Activated CD8-positive, alpha-beta memory T cell treated with anti-CD3 and anti-CD28 coated beads, Interleukin-2, amount 10 ng/mL, durations not matched to agents 7 days and 5 days (primary cell): ENCODE measurements at regions of chr19 and their contacts with region 1.

Region 1: GRCh38 chr19:10717356-10718204 is at the start of gene DNM2:
- DNase-seq: peak; percentile 99
- ATAC-seq: peak; percentile 93
- H3K4me3 Mint-ChIP-seq: peak within 1 kb of the TSS; percentile 98
- H3K27ac Mint-ChIP-seq: peak within 1 kb of the TSS; percentile 90
- H3K4me1 Mint-ChIP-seq: peaks cover 33% of the 10 kb centered on the region
- H3K27me3 Mint-ChIP-seq: no peaks in the 10 kb centered on the region
- total RNA-seq, gene DNM2: 267 to 315 TPM

Region 2: DNA sequence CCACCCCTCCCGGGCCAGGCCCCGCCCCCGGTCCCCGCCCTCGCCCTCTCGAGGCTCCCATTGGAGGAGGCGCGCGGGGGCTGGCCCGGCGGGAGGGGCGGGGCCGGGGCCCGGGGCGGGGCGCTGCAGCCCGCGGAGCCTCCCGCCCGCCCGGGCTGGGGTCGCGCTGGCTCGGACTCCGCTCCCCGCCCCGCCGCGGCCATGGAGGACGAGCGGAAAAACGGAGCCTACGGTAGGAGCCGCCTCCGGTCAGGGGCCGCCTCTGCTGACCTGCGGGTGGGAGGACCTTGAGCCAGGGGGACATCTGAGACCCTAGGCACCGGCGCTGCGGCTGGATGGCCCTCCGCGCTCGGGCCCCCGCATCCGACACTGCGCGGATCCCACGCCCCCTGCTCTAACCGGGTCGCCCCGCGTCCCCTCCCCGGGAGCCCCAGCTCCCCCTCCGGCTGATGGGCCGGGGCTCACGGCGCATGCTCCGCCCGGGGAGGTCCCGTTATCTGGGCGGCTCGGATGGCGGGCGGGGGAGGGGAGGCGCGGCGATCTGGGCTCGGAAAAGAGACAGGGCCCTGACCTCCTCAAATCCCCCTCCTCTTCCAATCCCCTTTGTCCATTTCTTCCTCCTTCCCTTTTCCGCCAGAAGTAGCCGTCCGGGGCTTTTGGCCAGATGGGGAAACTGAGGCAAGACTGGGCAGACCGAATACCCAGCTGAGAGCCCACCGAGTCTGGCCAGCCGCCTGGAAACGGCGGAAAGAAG is 115.1 kb before region 1 on chr19:
- CTCF ChIA-PET with region 1: no interaction called
- DNase-seq: peak; percentile 92
- ATAC-seq: peak; percentile 90
- H3K4me3 Mint-ChIP-seq: peak overlapping the region; percentile 90
- H3K27ac Mint-ChIP-seq: peak overlapping the region; percentile 99
- H3K4me1 Mint-ChIP-seq: peaks cover 23% of the 10 kb centered on the region
- H3K27me3 Mint-ChIP-seq: peaks cover 2% of the 10 kb centered on the region

Region 3: GRCh38 chr19:10690341-10690781 is 27.2 kb before region 1 on chr19:
- CTCF ChIA-PET with region 1: no interaction called
- DNase-seq: no peak
- ATAC-seq: no peak
- H3K4me3 Mint-ChIP-seq: no peak overlapping the region
- H3K27ac Mint-ChIP-seq: no peak overlapping the region
- H3K4me1 Mint-ChIP-seq: peaks cover 3% of the 10 kb centered on the region
- H3K27me3 Mint-ChIP-seq: peaks cover under 1% of the 10 kb centered on the region

Region 4: DNA sequence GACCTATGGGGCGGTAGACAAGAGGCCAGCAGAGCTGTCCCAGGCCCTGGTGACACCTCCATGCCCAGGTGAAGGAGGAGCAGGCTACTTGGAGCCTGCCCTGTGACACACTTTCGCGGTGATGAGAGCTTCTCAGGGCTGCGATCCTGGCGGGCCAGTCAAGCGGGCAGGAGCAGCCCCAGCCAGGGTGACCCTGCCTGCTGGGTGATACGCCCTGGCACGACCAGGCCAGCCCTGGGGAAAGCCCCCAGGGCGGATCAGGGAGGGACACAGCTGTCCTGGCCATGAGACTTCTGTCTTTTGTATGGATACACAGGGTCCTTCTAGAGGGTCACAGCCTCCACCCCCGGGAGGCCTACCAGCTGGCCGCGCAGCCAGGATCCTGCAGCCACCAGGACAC is 13.3 kb after region 1 on chr19:
- CTCF ChIA-PET with region 1: interaction called, 15 read pairs
- DNase-seq: no peak
- ATAC-seq: no peak
- H3K4me3 Mint-ChIP-seq: no peak overlapping the region
- H3K27ac Mint-ChIP-seq: peak overlapping the region; percentile 82
- H3K4me1 Mint-ChIP-seq: peaks cover 47% of the 10 kb centered on the region
- H3K27me3 Mint-ChIP-seq: no peaks in the 10 kb centered on the region

Region 5: DNA sequence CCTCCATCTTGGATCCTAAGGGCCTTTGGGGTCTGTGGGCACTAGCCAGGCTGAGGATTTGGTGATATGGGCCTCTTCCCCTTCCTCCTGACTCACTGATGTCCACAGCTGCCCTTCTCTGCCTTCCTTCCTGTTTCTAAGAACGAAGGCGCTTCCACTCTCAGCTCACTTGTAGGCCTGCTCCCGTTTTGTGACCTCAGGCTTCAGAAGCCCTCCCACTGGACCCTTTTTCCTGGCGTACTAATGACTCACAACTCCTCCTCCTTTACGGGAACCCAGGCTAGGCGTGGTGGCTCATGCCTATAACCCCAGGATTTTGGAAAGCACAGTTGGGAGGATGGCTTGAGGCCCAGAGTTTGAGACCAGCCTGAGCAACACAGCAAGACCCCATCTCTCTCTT is 62.8 kb after region 1 on chr19:
- CTCF ChIA-PET with region 1: interaction called, 13 read pairs
- DNase-seq: no peak
- ATAC-seq: no peak
- H3K4me3 Mint-ChIP-seq: no peak overlapping the region
- H3K27ac Mint-ChIP-seq: peak overlapping the region; percentile 42
- H3K4me1 Mint-ChIP-seq: peaks cover 28% of the 10 kb centered on the region
- H3K27me3 Mint-ChIP-seq: no peaks in the 10 kb centered on the region

Region 6: GRCh38 chr19:10828981-10829821 is 111.6 kb after region 1 on chr19:
- CTCF ChIA-PET with region 1: interaction called, 14 read pairs
- DNase-seq: no peak
- ATAC-seq: peak; percentile 37
- H3K4me3 Mint-ChIP-seq: no peak overlapping the region
- H3K27ac Mint-ChIP-seq: no peak overlapping the region
- H3K4me1 Mint-ChIP-seq: no peaks in the 10 kb centered on the region
- H3K27me3 Mint-ChIP-seq: no peaks in the 10 kb centered on the region

Region 7: DNA sequence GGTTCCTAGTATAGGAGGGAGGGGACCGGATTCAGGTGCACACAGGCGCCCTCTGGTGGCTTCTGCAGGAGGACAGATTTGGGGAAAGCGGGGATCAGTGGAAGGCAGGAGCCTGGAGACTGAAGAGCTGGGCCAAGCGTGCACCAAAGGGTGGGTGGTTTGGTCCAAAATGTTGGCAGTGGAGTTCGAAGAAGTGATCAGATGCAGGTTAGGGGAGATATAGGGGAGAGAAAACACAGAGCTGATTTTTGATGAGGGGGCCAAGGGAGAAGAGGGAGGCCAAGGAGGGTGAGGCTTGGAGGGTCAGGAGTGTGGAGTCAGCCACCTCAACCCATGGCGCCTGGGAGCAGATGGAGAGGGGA is 146.9 kb after region 1 on chr19:
- CTCF ChIA-PET with region 1: interaction called, 132 read pairs
- DNase-seq: peak; percentile 89
- ATAC-seq: peak; percentile 93
- H3K4me3 Mint-ChIP-seq: peak overlapping the region; percentile 19
- H3K27ac Mint-ChIP-seq: peak overlapping the region; percentile 57
- H3K4me1 Mint-ChIP-seq: peaks cover 27% of the 10 kb centered on the region
- H3K27me3 Mint-ChIP-seq: no peaks in the 10 kb centered on the region